ENCODE measurements at regions of chr10 and their contacts with region 1.

Region 1: DNA sequence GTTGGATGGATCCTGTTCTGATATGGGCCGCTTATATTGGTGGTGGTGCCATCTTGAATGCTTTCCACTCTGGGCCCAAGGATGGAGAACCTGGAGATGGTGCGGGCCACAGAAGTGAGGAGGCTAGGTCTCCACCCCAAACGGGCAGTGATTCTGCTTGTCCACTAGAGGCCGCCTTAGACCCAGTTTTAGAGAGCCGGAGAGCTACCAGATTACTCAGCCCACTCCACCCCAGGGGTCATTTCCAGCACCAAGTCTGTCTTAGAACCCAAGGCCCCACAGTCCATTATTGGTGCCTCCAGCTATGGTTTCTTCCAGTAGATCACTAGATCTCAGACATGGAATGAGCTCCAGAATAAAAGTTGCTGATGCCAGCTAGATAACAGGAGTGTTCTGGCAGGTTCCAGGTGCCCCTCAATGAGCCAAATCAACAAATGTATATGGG is 11.8 kb upstream of the CAMK2G start:
- DNase-seq: peak; percentile 84
- ATAC-seq: peak; percentile 77 to 86
- H3K4me3 ChIP-seq: no peak overlapping the region
- H3K27ac ChIP-seq: peak overlapping the region; percentile 97 to 98
- H3K4me1 ChIP-seq: peaks cover 51% of the 10 kb centered on the region
- CTCF ChIP-seq: peak; percentile 93
- EP300 ChIP-seq: no peak
- POLR2A ChIP-seq: no peak
- RAD21 ChIP-seq: peak; percentile 99

Region 2: DNA sequence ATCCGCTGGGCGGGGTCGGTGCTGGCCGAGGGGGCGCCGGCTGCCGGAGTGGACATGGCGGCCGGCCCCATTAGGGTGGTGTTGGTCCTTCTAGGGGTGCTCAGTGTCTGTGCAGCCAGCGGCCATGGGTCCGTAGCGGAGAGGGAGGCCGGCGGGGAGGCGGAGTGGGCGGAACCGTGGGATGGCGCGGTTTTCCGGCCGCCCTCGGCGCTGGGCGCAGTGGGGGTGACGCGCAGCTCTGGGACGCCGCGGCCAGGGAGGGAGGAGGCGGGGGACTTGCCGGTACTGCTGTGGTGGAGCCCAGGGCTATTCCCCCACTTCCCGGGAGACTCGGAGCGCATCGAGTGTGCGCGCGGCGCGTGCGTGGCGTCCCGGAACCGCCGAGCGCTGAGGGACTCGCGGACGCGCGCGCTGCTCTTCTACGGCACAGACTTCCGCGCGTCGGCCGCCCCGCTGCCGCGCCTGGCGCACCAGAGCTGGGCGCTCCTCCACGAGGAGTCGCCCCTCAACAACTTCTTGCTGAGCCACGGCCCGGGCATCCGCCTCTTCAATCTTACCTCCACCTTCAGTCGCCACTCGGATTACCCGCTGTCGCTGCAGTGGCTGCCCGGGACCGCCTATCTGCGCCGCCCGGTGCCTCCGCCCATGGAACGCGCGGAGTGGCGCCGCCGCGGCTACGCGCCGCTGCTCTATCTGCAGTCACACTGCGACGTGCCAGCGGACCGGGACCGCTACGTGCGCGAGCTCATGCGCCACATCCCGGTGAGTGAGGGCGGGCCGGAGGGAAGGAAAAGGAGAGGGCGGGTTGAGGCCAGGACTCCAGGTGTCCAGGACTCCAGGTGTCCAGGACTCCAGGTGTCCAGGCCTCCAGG is 113.6 kb before region 1 on chr10:
- CTCF ChIA-PET with region 1: no interaction called
- POLR2A ChIA-PET with region 1: no interaction called
- DNase-seq: peak; percentile 69 to 79
- ATAC-seq: peak; percentile 79 to 85
- H3K4me3 ChIP-seq: peak overlapping the region; percentile 58
- H3K27ac ChIP-seq: peak overlapping the region; percentile 94 to 95
- H3K4me1 ChIP-seq: peaks cover 27% of the 10 kb centered on the region
- CTCF ChIP-seq: no peak; the same call in 2 of the 3 replicates
- EP300 ChIP-seq: no peak
- POLR2A ChIP-seq: peak; percentile 78
- RAD21 ChIP-seq: 0 out of 5 replicates have a peak, but pooled peaks of 1 of the 2 experiments have one; percentile 22

Region 3: DNA sequence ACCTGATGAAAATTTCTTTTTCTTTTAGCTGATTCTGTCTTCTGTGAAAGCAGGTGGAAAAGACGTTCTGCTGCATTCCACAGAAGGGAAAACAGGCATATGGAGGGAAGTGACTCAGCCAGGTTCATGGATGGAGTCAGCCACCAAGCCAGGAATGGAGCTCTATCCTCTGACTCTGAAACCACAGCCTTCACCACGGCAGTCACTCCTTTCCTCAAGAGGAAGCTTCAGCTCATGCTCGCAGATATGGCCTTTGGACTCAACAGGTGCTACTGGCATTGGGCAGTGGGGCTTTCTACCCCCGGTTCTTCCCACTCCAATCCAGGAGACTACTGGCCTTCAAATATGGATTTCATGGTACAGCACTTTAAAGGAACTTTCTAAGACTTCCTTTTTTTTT is 13.3 kb after region 1 on chr10:
- CTCF ChIA-PET with region 1: interaction called, 162 read pairs
- POLR2A ChIA-PET with region 1: no interaction called
- DNase-seq: no peak
- ATAC-seq: peak; percentile 44 to 58; a peak in 3 of 6 replicates
- H3K4me3 ChIP-seq: no peak overlapping the region
- H3K27ac ChIP-seq: peak overlapping the region; percentile 29 to 96
- H3K4me1 ChIP-seq: peaks cover 51% of the 10 kb centered on the region
- CTCF ChIP-seq: no peak
- EP300 ChIP-seq: no peak
- POLR2A ChIP-seq: no peak
- RAD21 ChIP-seq: no peak

Region 4: GRCh38 chr10:73920089-73920488 is 34.0 kb after region 1 on chr10:
- CTCF ChIA-PET with region 1: interaction called, 936 read pairs
- POLR2A ChIA-PET with region 1: interaction called, 6 read pairs
- DNase-seq: no peak
- ATAC-seq: peak; percentile 21 to 23; a peak in 2 of 6 replicates
- H3K4me3 ChIP-seq: no peak overlapping the region
- H3K27ac ChIP-seq: no peak overlapping the region
- H3K4me1 ChIP-seq: no peaks in the 10 kb centered on the region
- CTCF ChIP-seq: no peak
- EP300 ChIP-seq: no peak
- POLR2A ChIP-seq: no peak
- RAD21 ChIP-seq: no peak

Region 5: DNA sequence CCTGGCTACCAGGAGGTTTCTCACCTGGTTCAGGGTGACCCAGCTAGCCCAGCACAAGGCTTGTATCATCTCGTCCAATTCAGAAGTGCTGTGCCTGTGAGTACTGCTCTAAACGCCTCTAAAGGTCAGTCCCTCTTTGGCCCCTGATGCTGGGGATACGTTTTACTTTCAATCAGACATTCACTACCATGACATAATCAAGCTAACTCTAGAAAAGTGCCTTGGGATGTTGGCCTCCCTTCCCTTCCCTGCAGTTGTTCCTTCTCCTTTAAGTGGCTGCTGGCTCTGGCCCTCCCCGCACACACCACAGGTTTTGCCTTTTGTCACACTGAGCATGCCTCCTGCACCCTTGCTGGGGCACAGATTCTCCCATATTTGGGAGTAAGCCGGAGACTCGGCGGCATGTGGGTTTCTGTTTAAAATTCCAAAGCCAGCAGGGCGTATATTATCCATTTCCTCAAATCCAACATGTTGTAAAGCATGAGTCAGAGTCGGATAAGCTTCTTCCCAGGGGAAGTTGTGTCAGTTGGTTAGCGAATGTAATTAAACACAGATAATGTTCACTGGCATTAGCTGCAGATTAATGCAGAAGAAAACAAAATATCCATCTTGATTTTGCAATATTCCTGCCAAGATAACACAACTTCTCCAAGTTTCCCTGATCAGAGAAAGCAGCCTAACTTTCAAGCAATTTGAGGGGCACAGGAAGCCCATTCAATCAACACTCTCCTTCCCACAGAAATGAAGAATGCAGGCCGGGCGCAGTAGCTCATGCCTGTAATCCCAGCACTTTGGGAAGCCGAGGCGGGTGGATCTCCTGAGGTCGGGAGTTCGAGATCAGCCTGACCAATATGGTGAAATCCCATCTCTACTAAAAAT is 80.0 kb after region 1 on chr10:
- CTCF ChIA-PET with region 1: interaction called, 15 read pairs
- POLR2A ChIA-PET with region 1: interaction called, 6 read pairs
- DNase-seq: peak; percentile 81 to 97
- ATAC-seq: peak; percentile 97 to 98
- H3K4me3 ChIP-seq: 0 out of 3 replicates have a peak overlapping the region, but pooled peaks have one; percentile 5
- H3K27ac ChIP-seq: peak overlapping the region; percentile 91 to 94
- H3K4me1 ChIP-seq: peaks cover 35% of the 10 kb centered on the region
- CTCF ChIP-seq: no peak
- EP300 ChIP-seq: peak in 1 of 2 experiments; percentile 54; a peak in 1 of 5 replicates
- POLR2A ChIP-seq: peak; percentile 43
- RAD21 ChIP-seq: peak in 1 of 2 experiments; percentile 10; a peak in 1 of 5 replicates

Region 6: DNA sequence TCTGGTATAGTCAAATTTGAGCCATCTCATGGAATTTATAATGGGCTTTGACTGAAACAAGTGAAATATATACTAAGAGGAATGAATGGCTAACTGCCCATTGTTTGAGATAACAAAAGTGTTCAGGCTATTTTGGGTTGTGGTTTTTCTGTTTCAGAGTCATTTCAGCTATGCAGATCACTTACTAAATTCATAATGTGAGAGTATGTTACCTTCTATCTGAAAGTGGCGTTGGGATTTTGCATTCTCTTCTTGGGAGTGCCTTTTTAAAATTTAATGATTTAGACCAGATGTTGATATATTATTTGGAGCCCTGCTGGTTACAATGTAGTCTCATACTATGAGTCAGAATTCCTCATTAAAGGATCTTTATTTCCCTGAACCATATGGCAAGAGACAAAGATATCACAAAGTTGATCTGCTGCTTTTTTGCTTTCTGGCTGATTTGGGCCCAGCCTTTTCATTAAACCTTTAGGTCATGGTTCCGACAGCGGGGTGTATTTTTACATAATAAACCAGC is 122.2 kb after region 1 on chr10:
- CTCF ChIA-PET with region 1: interaction called, 11 read pairs
- POLR2A ChIA-PET with region 1: no interaction called
- DNase-seq: no peak
- ATAC-seq: peak in 1 of 2 experiments; percentile 7; a peak in 1 of 6 replicates
- H3K4me3 ChIP-seq: no peak overlapping the region
- H3K27ac ChIP-seq: peak overlapping the region in 1 of 2 experiments; percentile 69; a peak in 4 of 6 replicates
- H3K4me1 ChIP-seq: peaks cover 79% of the 10 kb centered on the region
- CTCF ChIP-seq: no peak
- EP300 ChIP-seq: no peak
- POLR2A ChIP-seq: no peak
- RAD21 ChIP-seq: no peak

Region 7: GRCh38 chr10:74113546-74113945 is 227.4 kb after region 1 on chr10:
- CTCF ChIA-PET with region 1: interaction called, 10 read pairs
- POLR2A ChIA-PET with region 1: interaction called, 3 read pairs
- DNase-seq: no peak
- ATAC-seq: peak in 1 of 2 experiments; percentile 16; a peak in 1 of 6 replicates
- H3K4me3 ChIP-seq: no peak overlapping the region
- H3K27ac ChIP-seq: no peak overlapping the region
- H3K4me1 ChIP-seq: peaks cover 22% of the 10 kb centered on the region
- CTCF ChIP-seq: no peak
- EP300 ChIP-seq: no peak
- POLR2A ChIP-seq: no peak
- RAD21 ChIP-seq: no peak

Measured in A549 (cell line).